MCF 10A (cell line): ENCODE measurements at regions of chr2 and their contacts with region 1.

Region 1: GRCh38 chr2:109702618-109702985 is 88.4 kb downstream of the SOWAHC start:
- DNase-seq: peak; percentile 89
- H3K4me3 Mint-ChIP-seq: peak overlapping the region; percentile 68
- H3K27ac Mint-ChIP-seq: peak overlapping the region; percentile 97
- H3K4me1 Mint-ChIP-seq: peaks cover 40% of the 10 kb centered on the region
- H3K27me3 Mint-ChIP-seq: no peaks in the 10 kb centered on the region
- CTCF ChIP-seq: no peak

Region 2: DNA sequence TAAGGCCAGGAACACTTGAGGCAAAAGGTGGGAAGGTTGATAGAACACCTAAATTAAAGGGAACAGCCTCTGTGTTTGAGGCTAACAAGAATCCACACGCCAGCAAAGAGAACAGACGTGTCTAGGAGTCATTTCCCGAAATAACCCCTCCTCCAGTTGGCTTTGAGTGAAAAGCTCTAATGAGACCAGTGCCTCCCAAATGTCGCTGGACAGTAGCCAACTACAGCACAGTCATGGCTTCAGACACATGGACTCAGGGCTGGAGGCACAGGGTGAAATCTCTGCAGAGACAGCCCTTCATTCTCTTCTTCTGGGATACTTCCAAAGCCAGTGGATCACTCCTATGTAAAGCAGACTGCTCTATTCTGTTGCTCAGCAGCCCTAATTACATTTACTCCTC is 38.9 kb before region 1 on chr2:
- CTCF ChIA-PET with region 1: interaction called, 3 read pairs
- POLR2A ChIA-PET with region 1: interaction called, 11 read pairs
- intact Hi-C with region 1: no loop called
- DNase-seq: peak; percentile 98
- H3K4me3 Mint-ChIP-seq: no peak overlapping the region
- H3K27ac Mint-ChIP-seq: peak overlapping the region; percentile 24
- H3K4me1 Mint-ChIP-seq: peaks cover 17% of the 10 kb centered on the region
- H3K27me3 Mint-ChIP-seq: no peaks in the 10 kb centered on the region
- CTCF ChIP-seq: no peak

Region 3: DNA sequence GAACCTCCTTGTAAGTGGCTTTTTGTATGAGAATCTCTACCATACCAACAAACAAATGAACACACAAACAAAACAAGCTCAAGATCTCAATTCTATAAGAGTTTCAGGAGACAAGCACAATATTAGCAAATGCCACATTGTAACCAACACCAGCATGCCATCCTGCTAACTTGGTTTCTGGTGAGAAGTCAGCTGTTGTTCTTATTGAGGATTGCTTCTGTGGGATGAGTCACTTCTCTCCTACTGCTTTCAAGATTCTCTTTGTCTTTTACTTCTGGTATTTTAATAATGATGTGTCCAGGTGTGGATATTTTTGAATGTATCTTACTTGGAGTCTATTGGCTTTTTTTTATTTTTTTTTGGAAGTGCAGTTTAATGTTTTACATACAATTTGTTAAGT is 1549.8 kb after region 1 on chr2:
- CTCF ChIA-PET with region 1: no interaction called
- POLR2A ChIA-PET with region 1: no interaction called
- intact Hi-C with region 1: no loop called
- DNase-seq: peak; percentile 11
- H3K4me3 Mint-ChIP-seq: no peak overlapping the region
- H3K27ac Mint-ChIP-seq: no peak overlapping the region
- H3K4me1 Mint-ChIP-seq: no peaks in the 10 kb centered on the region
- H3K27me3 Mint-ChIP-seq: no peaks in the 10 kb centered on the region
- CTCF ChIP-seq: no peak